Aorta (tissue), 5 donors: ENCODE measurements at regions of chr12 and their contacts with region 1.

Region 1: DNA sequence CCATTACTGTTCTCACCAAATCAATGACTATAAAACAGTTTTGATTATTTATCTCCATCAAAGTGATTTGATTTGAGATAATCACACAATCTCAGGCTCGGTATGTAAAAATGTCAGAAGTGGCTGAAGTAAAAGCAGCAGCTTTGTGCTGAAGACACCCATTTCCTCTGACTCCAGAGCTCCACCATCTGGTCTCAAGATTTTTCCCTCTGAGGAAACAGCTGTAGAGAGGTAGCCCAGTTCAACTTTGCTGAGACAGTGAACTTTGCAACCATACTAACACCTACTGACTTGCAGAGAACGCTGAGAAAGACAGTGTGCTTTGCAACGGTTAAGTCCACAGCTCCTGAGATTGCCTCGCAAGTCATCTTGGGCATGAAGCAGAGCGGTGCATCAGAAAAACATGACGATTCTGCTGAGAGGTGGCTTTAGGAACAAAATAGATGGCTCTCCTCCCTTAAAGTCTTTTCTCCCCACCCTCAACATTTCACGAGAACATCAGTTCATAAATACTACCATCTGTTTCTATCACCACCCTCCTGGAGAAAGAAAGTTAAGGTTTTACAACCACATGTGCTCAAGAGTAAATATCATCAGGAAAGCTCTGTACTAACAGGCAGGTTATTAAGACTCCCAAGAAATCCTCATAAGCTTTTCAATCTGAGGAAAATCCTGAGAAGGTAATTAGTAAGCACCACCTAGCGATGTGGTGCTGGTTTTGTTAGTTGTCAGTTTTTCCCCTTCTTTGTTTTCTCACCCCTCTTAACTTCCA is 34.8 kb downstream of the HIGD1C start:
- DNase-seq: no peak
- ATAC-seq: peak; percentile 71
- H3K4me3 ChIP-seq: no peak overlapping the region
- H3K27ac ChIP-seq: peak overlapping the region in 1 of 2 donors; percentile 51
- H3K4me1 ChIP-seq: peaks cover 3 to 6% of the 10 kb centered on the region in 2 donors
- H3K27me3 ChIP-seq: no peaks in the 10 kb centered on the region

Region 2: GRCh38 chr12:50765095-50765911 is 221.8 kb before region 1 on chr12:
- intact Hi-C with region 1: loop called in 1 of 2 experiments (anchors 5 kb)
- DNase-seq: no peak
- ATAC-seq: peak; percentile 67
- H3K4me3 ChIP-seq: peak overlapping the region; percentile 78 to 100
- H3K27ac ChIP-seq: peak overlapping the region in 1 of 2 donors; percentile 78
- H3K4me1 ChIP-seq: peaks cover 0 to 7% of the 10 kb centered on the region in 2 donors
- H3K27me3 ChIP-seq: no peaks in the 10 kb centered on the region

Region 3: GRCh38 chr12:50825372-50825838 is 161.7 kb before region 1 on chr12:
- intact Hi-C with region 1: loop called (anchors 2 kb)
- DNase-seq: no peak
- ATAC-seq: peak; percentile 89
- H3K4me3 ChIP-seq: no peak overlapping the region
- H3K27ac ChIP-seq: no peak overlapping the region
- H3K4me1 ChIP-seq: no peaks in the 10 kb centered on the region
- H3K27me3 ChIP-seq: no peaks in the 10 kb centered on the region

Region 4: DNA sequence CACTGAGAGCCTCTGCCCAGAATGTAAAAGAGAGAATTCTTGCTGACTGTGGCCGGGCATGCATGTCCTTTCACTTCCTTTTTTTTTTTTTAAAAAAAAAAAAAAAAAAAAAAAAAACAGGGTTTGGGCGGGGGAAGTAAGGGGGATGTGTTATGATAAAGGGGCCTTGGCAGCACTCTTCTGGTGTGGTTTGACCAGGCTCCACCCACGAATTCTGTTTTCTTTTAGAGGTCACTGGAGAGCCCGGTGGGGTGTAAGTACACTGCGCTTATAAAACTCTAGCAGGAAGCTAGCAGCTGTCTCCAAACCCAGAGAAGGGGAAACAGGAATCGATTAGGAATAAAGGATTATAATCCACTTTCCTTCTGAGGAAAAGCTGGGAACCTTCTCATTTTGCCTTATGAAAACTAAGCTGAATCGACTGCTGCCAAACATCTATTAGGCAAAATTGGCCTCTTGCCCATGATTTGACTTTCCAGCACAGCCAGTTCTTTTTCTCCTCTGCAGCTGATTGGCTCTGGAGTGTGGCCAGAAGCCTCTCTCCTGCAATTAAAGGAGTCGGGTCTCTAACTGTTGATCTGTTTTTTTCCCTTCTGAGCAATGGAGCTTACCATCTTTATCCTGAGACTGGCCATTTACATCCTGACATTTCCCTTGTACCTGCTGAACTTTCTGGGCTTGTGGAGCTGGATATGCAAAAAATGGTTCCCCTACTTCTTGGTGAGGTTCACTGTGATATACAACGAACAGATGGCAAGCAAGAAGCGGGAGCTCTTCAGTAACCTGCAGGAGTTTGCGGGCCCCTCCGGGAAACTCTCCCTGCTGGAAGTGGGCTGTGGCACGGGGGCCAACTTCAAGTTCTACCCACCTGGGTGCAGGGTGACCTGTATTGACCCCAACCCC is 62.5 kb before region 1 on chr12:
- intact Hi-C with region 1: loop called in 1 of 2 experiments (anchors 2 kb)
- DNase-seq: peak; percentile 92 to 94
- ATAC-seq: peak; percentile 96
- H3K4me3 ChIP-seq: peak overlapping the region; percentile 84 to 95
- H3K27ac ChIP-seq: peak overlapping the region; percentile 82
- H3K4me1 ChIP-seq: peaks cover 0 to 4% of the 10 kb centered on the region in 2 donors
- H3K27me3 ChIP-seq: no peaks in the 10 kb centered on the region

Region 5: GRCh38 chr12:51009056-51009440 is 21.9 kb after region 1 on chr12:
- intact Hi-C with region 1: no loop called
- DNase-seq: peak; percentile 80 to 89
- ATAC-seq: peak; percentile 60
- H3K4me3 ChIP-seq: no peak overlapping the region
- H3K27ac ChIP-seq: no peak overlapping the region
- H3K4me1 ChIP-seq: no peaks in the 10 kb centered on the region
- H3K27me3 ChIP-seq: no peaks in the 10 kb centered on the region

Region 6: GRCh38 chr12:51020448-51021182 is 33.5 kb after region 1 on chr12:
- intact Hi-C with region 1: loop called in 1 of 2 experiments (anchors 5 kb)
- DNase-seq: no peak
- ATAC-seq: no peak
- H3K4me3 ChIP-seq: no peak overlapping the region
- H3K27ac ChIP-seq: no peak overlapping the region
- H3K4me1 ChIP-seq: no peaks in the 10 kb centered on the region
- H3K27me3 ChIP-seq: no peaks in the 10 kb centered on the region